RWPE1 (cell line): ENCODE measurements at regions of chr4 and their contacts with region 1.

Region 1: DNA sequence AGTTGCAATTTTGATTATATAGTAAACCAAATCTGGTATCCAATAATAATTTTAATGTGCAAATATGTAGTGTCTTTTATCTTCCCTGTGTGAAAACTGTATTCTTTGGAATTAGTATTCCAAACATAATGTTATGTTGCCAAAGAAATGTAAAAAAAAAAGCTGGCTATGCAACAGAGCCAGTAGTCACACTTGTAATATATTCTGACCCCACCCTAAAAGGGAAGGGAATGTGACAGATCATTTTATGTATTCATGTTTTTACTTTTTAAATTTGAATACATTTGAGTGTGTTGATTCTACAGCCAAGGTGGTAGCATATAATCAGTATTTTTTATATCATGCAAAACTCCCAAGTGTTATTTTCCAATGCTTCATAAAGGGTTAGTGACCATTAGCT is 27.9 kb upstream of the MCUB start:
- DNase-seq: no peak
- H3K27ac ChIP-seq: no peak overlapping the region
- CTCF ChIP-seq: no peak

Region 2: GRCh38 chr4:109902559-109903251 is 370.5 kb after region 1 on chr4:
- CTCF ChIA-PET with region 1: no interaction called
- POLR2A ChIA-PET with region 1: interaction called, 13 read pairs
- DNase-seq: no peak
- H3K27ac ChIP-seq: no peak overlapping the region
- CTCF ChIP-seq: no peak